ENCODE measurements at regions of chr20 and their contacts with region 1.

Region 1: DNA sequence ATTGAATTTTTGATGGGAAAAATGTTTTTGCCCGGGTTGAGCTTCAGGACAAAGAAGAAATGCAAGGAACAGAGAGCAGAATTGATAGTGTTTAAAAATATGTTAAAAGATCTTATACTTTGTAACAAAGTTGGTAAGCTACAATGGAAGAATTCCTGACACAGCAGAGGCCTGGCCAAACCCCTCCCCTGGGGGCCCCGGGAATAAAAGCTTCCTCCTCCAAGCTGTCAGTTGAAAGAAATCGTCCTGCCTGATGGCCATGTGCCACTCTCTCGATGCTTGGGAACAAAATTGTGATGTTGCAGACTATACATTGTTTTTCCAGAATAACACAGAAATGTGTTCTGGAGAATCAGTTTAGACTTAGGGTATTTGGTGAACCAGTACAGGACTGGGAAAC is 14.2 kb upstream of the TOX2 start:
- DNase-seq: no peak
- H3K4me3 ChIP-seq: no peak overlapping the region
- H3K27ac ChIP-seq: no peak overlapping the region
- H3K27me3 ChIP-seq: no peaks in the 10 kb centered on the region
- CTCF ChIP-seq: no peak

Region 2: GRCh38 chr20:43699941-43700565 is 200.4 kb before region 1 on chr20:
- CTCF ChIA-PET with region 1: no interaction called
- POLR2A ChIA-PET with region 1: no interaction called
- DNase-seq: no peak
- H3K4me3 ChIP-seq: no peak overlapping the region
- H3K27ac ChIP-seq: no peak overlapping the region
- H3K27me3 ChIP-seq: no peaks in the 10 kb centered on the region
- CTCF ChIP-seq: no peak

Region 3: GRCh38 chr20:44050925-44051660 is 150.6 kb after region 1 on chr20:
- CTCF ChIA-PET with region 1: no interaction called
- POLR2A ChIA-PET with region 1: interaction called, 10 read pairs
- DNase-seq: no peak
- H3K4me3 ChIP-seq: no peak overlapping the region
- H3K27ac ChIP-seq: no peak overlapping the region
- H3K27me3 ChIP-seq: no peaks in the 10 kb centered on the region
- CTCF ChIP-seq: no peak

Region 4: DNA sequence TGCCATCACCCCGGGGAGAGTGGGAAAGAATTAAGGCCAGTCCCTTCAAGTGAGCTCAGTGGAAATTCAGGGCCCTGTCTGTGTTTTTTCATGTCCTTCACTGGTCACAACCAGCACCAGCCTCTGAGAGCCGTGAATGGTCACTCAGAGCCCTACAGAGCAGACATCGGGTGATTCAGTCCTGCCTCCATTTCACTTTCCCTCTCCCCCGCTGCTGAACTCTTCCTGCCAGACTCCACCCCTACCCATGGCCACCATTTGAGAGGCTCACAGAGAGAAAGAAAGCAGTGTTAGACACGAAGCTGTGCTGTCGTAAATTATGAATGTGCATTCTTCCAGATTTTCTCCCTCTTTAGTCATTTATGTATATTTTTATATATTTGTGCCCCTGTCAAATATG is 441.8 kb after region 1 on chr20:
- CTCF ChIA-PET with region 1: no interaction called
- POLR2A ChIA-PET with region 1: no interaction called
- DNase-seq: no peak
- H3K4me3 ChIP-seq: no peak overlapping the region
- H3K27ac ChIP-seq: no peak overlapping the region
- H3K27me3 ChIP-seq: peaks cover 16% of the 10 kb centered on the region
- CTCF ChIP-seq: no peak